RWPE1 (cell line): ENCODE measurements at regions of chr17 and their contacts with region 1.

Region 1: DNA sequence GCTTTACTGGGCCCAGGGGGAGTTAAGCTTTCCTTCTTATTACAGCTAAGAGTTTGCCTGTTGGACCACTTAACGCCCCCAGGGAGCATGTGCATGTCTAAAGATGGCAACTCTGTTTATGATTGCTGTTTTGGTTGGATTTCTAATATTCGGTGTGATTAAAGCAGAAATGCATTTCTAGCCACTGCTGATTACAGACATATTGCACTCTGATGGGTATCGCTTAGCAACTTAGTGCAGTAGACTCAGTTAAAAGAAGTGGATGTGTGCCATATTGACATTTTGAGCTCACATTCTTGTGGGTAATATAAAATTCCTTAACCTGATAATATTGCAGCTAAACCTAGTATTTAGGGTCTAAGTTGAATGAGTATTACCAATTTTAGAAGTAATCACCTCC is 4.2 kb downstream of the NF1 start:
- DNase-seq: no peak
- H3K27ac ChIP-seq: no peak overlapping the region
- CTCF ChIP-seq: no peak

Region 2: DNA sequence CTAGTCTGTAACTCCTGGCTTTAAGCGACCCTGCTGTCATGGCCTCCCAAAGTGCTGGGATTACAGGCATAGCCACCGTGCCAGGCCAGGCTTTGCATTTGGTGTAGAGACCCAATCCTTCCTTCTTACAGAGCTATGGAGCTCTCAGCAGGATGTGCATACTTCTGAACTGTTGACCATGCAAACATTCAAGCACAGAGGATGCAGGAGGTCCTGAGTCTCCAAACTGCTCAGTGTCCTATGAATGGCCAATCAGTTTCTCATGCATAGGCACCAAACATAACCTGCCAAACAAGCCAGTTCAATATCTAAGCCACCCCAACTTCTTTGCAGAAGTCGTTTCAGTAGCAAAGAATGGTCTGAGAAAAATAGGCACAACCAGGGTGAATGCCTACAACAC is 44.3 kb before region 1 on chr17:
- CTCF ChIA-PET with region 1: interaction called, 3 read pairs
- POLR2A ChIA-PET with region 1: interaction called, 12 read pairs
- DNase-seq: no peak
- H3K27ac ChIP-seq: no peak overlapping the region
- CTCF ChIP-seq: no peak

Region 3: DNA sequence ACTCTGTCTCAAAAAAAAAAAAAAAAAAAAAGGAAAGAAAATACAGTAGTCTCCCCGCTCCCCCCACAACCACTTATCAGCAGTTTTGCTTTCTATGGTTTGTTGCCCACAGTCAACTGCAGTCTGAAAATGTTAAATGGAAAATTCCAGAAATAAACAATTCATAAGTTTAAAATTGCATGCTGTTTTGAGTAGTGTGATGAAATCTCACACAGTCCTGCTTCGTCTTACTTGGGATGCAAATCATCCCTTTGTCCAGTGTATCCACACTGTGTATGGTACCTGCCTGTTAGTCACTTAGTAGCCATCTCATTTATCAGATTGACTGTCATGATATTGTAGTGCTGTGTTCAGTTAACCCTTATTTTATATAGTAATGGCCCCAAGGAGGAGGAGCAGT is 37.3 kb after region 1 on chr17:
- CTCF ChIA-PET with region 1: no interaction called
- POLR2A ChIA-PET with region 1: no interaction called
- DNase-seq: no peak
- H3K27ac ChIP-seq: no peak overlapping the region
- CTCF ChIP-seq: no peak

Region 4: GRCh38 chr17:31147507-31148202 is 48.6 kb after region 1 on chr17:
- CTCF ChIA-PET with region 1: no interaction called
- POLR2A ChIA-PET with region 1: no interaction called
- DNase-seq: no peak
- H3K27ac ChIP-seq: no peak overlapping the region
- CTCF ChIP-seq: no peak

Region 5: DNA sequence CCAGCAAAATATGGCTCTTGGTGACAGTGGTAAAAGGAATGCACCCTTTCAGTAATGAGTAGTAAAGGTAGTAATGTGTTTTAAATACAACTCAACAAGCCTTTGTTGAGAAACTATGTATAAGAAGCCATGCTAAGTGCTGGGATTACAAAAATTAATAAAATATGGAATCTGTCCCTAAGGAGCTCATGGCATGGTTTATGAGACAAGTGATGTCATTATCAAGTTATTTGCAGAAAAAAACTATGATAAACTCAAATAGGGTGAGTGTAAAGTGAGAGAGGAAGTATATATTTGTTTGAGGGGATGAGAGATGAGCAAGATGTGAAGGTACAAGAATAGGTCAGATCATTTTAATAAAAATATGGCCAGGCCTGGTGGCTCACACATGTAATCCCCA is 72.7 kb after region 1 on chr17:
- CTCF ChIA-PET with region 1: no interaction called
- POLR2A ChIA-PET with region 1: no interaction called
- DNase-seq: no peak
- H3K27ac ChIP-seq: no peak overlapping the region
- CTCF ChIP-seq: no peak